ENCODE measurements at regions of chr2 and their contacts with region 1.

Region 1: DNA sequence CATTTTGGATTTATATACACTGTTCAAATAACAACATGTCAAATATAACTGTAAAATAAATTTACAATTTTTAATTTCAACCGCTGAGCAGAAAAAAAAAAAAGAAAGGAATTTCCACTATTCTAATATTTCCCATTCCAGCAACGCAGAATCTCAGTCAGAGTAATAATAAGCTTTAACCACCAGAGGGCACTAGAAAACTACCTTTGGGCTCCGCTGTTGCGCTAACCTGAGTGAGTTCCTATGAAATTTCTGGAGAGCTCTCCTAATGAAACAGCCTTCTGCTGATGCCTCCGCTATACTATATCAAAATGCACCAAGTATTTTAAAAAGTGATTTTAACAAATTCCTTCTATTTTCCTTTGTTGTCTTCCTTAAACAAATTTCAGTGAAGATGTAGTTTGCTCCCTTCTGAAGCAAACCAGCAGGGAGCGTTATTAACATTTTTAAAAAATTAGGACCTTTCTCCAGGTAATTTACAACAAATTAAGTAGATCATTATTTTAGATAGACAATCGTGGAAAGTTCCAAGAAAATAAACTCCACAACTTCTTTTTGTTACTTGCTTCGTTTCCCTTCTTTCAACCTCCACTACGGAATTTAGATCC is 23.0 kb downstream of the ERMN start:
- DNase-seq: peak in 1 of 2 donors; percentile 77
- ATAC-seq: peak; percentile 72 to 87 (median 75)
- H3K4me3 ChIP-seq: no peak overlapping the region
- H3K4me3 Mint-ChIP-seq: no peak overlapping the region
- H3K27ac ChIP-seq: no peak overlapping the region
- H3K27ac Mint-ChIP-seq: no peak overlapping the region
- H3K4me1 ChIP-seq: no peaks in the 10 kb centered on the region
- H3K4me1 Mint-ChIP-seq: no peaks in the 10 kb centered on the region
- H3K27me3 ChIP-seq: no peaks in the 10 kb centered on the region
- H3K27me3 Mint-ChIP-seq: peaks cover 8 to 32% of the 10 kb centered on the region in 2 donors
- CTCF ChIP-seq: peak; percentile 97

Region 2: GRCh38 chr2:157046396-157046795 is 256.2 kb before region 1 on chr2:
- intact Hi-C with region 1: no loop called
- DNase-seq: no peak
- ATAC-seq: no peak
- H3K4me3 ChIP-seq: no peak overlapping the region
- H3K4me3 Mint-ChIP-seq: no peak overlapping the region
- H3K27ac ChIP-seq: no peak overlapping the region
- H3K27ac Mint-ChIP-seq: no peak overlapping the region
- H3K4me1 ChIP-seq: no peaks in the 10 kb centered on the region
- H3K4me1 Mint-ChIP-seq: no peaks in the 10 kb centered on the region
- H3K27me3 ChIP-seq: no peaks in the 10 kb centered on the region
- H3K27me3 Mint-ChIP-seq: no peaks in the 10 kb centered on the region
- CTCF ChIP-seq: no peak

Region 3: GRCh38 chr2:157245846-157246764 is 56.5 kb before region 1 on chr2:
- intact Hi-C with region 1: no loop called
- DNase-seq: no peak
- ATAC-seq: no peak
- H3K4me3 ChIP-seq: no peak overlapping the region
- H3K4me3 Mint-ChIP-seq: no peak overlapping the region
- H3K27ac ChIP-seq: no peak overlapping the region
- H3K27ac Mint-ChIP-seq: no peak overlapping the region
- H3K4me1 ChIP-seq: no peaks in the 10 kb centered on the region
- H3K4me1 Mint-ChIP-seq: no peaks in the 10 kb centered on the region
- H3K27me3 ChIP-seq: no peaks in the 10 kb centered on the region
- H3K27me3 Mint-ChIP-seq: peaks cover 0 to 13% of the 10 kb centered on the region in 2 donors
- CTCF ChIP-seq: no peak

Region 4: DNA sequence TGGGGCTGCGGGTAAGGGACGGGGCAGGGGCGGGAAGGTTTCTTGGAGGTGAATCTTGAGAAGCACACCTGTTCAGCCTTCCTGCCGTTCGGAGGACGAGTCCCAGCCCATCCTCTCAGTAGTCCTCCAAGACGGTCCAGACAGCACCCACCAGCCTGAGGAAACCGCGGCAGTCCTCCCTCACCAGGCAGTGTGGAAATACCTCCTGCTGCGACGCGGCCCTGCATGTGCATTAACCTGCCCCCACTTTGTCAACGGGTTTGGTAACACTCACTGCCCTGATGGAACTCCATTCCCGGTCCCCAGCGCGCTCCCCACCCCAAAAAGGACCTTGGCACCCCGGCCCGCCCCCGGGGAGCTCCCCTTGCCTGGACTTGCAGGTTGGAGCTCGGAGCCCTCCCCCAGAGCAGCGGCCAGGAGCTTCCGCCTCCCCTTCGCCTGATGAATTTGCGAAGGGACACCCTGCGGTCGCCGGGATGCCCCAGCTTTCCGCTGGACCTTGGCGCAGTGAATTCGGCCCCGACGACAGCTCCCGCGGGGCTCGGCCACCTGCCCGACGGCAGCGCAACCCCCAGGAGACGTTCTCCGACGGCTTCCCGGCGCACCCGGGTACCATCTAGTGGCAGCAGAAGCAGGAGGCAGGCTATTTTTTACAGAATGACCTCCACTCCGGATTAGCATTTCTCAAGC is 294.5 kb after region 1 on chr2:
- intact Hi-C with region 1: loop called (anchors 1 kb)
- DNase-seq: peak; percentile 27 to 70
- ATAC-seq: peak; percentile 64 to 78 (median 72)
- H3K4me3 ChIP-seq: no peak overlapping the region
- H3K4me3 Mint-ChIP-seq: peak overlapping the region; percentile 13
- H3K27ac ChIP-seq: no peak overlapping the region
- H3K27ac Mint-ChIP-seq: no peak overlapping the region
- H3K4me1 ChIP-seq: peaks cover 5% of the 10 kb centered on the region
- H3K4me1 Mint-ChIP-seq: peaks cover 0 to 5% of the 10 kb centered on the region in 2 donors
- H3K27me3 ChIP-seq: peaks cover 12% of the 10 kb centered on the region
- H3K27me3 Mint-ChIP-seq: peaks cover 35 to 51% of the 10 kb centered on the region in 2 donors
- CTCF ChIP-seq: peak; percentile 58

Region 5: GRCh38 chr2:158006961-158007719 is 704.5 kb after region 1 on chr2:
- intact Hi-C with region 1: loop called (anchors 1 kb)
- DNase-seq: peak in 1 of 2 donors; percentile 30
- ATAC-seq: no peak
- H3K4me3 ChIP-seq: no peak overlapping the region
- H3K4me3 Mint-ChIP-seq: no peak overlapping the region
- H3K27ac ChIP-seq: no peak overlapping the region
- H3K27ac Mint-ChIP-seq: no peak overlapping the region
- H3K4me1 ChIP-seq: no peaks in the 10 kb centered on the region
- H3K4me1 Mint-ChIP-seq: no peaks in the 10 kb centered on the region
- H3K27me3 ChIP-seq: peaks cover 3% of the 10 kb centered on the region
- H3K27me3 Mint-ChIP-seq: peaks cover 19 to 53% of the 10 kb centered on the region in 2 donors
- CTCF ChIP-seq: no peak

Region 6: DNA sequence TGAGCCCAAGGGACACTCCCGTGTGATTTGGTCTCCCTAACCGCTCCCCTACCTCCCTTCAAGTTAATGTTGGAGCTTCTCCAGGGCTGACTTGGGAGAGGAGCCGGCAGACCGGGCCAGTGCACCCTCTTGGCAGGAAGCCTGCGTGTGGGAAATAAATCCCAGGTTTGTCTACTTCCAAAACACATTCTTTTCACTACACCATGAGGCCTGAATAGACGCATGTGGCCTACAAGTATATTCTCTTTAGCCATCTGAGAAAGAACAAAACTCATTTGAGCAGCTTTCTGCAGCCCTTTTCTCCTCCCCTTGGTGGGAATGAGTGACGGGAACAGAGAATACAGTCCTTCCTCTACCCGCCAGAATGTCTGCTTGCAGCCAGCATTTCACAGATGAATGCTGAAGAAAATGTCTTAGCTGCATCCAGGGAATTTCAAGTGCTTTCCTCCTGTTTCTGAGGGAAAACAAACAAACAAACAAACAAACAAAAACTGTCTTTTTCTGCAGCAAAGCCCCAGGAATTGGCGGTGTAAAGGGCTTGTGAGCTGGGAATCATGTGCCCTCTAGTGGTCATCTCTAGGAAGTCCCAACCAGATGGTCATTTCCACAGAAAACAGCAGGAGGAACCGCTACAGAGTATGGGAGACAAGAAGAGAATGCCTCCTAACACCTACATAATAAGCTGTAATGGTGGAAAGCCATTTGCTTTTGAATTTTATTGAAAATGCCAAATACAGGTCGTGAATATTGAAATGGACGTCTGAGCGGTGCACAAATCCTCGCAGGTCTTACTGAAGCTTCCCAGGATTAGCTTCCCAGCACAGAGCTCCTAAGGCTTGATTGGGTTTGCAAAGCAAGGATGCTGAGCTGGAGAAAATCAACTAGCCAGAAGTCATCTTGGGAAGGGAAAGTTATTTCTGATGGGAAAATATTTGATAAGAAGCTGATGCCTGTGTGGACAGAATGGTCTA is 1451.3 kb after region 1 on chr2:
- intact Hi-C with region 1: loop called (anchors 2 kb)
- DNase-seq: peak in 1 of 2 donors; percentile 67
- ATAC-seq: peak; percentile 64 to 84 (median 76)
- H3K4me3 ChIP-seq: no peak overlapping the region
- H3K4me3 Mint-ChIP-seq: no peak overlapping the region
- H3K27ac ChIP-seq: no peak overlapping the region
- H3K27ac Mint-ChIP-seq: no peak overlapping the region
- H3K4me1 ChIP-seq: no peaks in the 10 kb centered on the region
- H3K4me1 Mint-ChIP-seq: no peaks in the 10 kb centered on the region
- H3K27me3 ChIP-seq: no peaks in the 10 kb centered on the region
- H3K27me3 Mint-ChIP-seq: peaks cover 8 to 16% of the 10 kb centered on the region in 2 donors
- CTCF ChIP-seq: peak; percentile 92

Measured in natural killer cell (primary cell).